Activated CD4-positive, alpha-beta T cell treated with anti-CD3 and anti-CD28 coated beads for 36 hours (primary cell): ENCODE measurements at regions of chr9 and their contacts with region 1.

Region 1: GRCh38 chr9:37465249-37466036 is at the start of gene ZBTB5:
- DNase-seq: peak; percentile 99
- ATAC-seq: peak; percentile 85
- H3K4me3 Mint-ChIP-seq: peak within 1 kb of the TSS; percentile 97
- H3K27ac Mint-ChIP-seq: peak within 1 kb of the TSS; percentile 96
- H3K4me1 Mint-ChIP-seq: peaks cover 30% of the 10 kb centered on the region
- H3K27me3 Mint-ChIP-seq: no peaks in the 10 kb centered on the region
- total RNA-seq, gene ZBTB5: 8.0 to 9.1 TPM

Region 2: DNA sequence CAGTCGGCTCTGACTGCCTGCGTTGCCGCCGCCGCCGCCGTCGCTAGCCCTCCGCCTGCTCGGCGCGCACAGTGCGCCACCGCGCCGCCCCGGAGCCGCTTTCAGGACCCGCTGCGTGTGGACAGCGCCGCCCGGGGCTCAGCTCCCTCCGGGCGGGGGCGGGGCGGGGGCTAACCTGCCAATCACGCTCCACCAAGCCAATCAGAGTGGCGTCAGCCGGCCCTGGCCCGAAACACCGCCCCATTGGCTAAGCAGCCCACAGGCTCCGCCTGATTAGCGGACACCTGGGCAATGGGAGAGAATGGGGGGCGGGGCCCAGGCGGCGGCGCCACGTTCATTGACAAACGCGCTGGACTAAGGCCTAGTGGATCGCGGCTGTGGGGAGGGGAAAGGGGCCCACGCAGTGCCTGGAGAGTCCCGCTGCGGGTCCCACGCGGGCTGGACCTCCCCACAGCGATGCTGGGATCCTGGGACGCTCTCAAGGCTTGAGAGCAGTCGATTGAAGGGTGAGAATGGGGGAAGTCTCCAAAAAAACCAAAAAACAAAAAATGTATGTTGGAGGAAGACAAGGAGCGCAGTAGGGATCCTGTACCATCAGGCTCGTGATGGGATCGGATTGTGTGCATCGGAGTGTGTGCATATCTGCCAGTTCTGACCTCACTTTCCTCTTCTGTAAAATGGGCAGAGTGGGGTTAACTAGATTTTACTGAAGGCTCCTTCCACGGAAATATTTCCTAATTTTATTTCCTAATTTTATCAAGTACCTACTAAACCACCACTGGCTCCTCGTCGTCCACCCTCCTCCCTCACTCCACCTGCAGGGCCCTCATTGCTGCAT is 437.6 kb before region 1 on chr9:
- CTCF ChIA-PET with region 1: no interaction called
- POLR2A ChIA-PET with region 1: no interaction called
- intact Hi-C with region 1: loop called in 1 of 2 experiments (anchors 1 kb)
- DNase-seq: peak; percentile 96
- ATAC-seq: peak; percentile 97
- H3K4me3 Mint-ChIP-seq: peak overlapping the region; percentile 64
- H3K27ac Mint-ChIP-seq: no peak overlapping the region
- H3K4me1 Mint-ChIP-seq: peaks cover 37% of the 10 kb centered on the region
- H3K27me3 Mint-ChIP-seq: peaks cover 80% of the 10 kb centered on the region

Region 3: DNA sequence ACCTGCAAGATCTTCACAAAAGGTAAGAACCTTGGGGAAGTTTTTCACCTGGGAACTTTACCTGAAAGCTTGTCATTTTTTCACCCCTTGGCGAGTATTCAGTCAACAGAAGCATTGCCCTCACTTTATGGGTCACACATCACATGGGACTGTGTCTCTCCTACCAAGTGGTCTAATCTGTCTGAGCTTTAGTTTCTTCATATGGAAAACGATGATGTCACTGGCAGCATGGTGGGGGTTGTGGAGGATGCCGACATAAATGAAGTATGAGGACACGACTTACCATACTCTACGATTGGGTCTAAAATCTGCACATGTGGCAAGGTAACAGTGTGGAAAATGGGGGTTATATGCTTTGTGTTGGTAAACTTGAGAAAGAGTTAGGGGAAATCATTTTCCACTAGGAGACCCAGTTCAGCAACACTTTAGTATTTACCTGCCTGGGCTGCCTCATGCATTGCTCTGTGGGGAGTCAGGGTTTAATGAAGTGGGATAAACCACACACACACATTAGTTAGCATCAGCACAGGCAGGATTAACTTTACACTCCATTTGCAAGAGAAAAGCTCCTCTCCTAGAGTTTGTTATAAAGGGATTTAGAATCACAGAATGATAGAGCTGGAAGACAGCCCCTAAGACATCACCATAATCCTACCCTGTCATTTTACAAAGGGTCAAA is 411.6 kb before region 1 on chr9:
- CTCF ChIA-PET with region 1: no interaction called
- POLR2A ChIA-PET with region 1: no interaction called
- intact Hi-C with region 1: no loop called
- DNase-seq: no peak
- ATAC-seq: no peak
- H3K4me3 Mint-ChIP-seq: no peak overlapping the region
- H3K27ac Mint-ChIP-seq: no peak overlapping the region
- H3K4me1 Mint-ChIP-seq: no peaks in the 10 kb centered on the region
- H3K27me3 Mint-ChIP-seq: peaks cover 33% of the 10 kb centered on the region

Region 4: DNA sequence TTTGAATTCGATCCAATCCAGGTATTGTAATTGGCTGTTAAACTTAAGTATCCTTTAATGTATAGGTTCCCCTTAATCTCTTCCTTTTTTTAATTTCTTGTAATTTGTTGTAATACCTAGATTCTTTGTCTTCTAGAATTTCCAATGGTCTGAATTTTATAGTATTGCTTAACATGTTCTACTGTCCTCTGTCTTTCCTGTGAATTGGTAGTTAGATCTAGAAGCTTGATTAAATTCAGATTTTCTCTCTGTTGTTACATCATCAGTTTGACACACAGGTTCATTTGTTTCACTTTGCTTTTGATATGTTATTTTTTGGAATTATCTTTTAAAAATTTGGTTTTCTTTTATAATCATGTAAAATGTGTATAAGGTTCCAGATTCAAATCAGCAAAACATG is 331.3 kb before region 1 on chr9:
- CTCF ChIA-PET with region 1: no interaction called
- POLR2A ChIA-PET with region 1: no interaction called
- intact Hi-C with region 1: no loop called
- DNase-seq: no peak
- ATAC-seq: no peak
- H3K4me3 Mint-ChIP-seq: no peak overlapping the region
- H3K27ac Mint-ChIP-seq: no peak overlapping the region
- H3K4me1 Mint-ChIP-seq: peaks cover 30% of the 10 kb centered on the region
- H3K27me3 Mint-ChIP-seq: no peaks in the 10 kb centered on the region

Region 5: GRCh38 chr9:37251452-37251851 is 214.0 kb before region 1 on chr9:
- CTCF ChIA-PET with region 1: no interaction called
- POLR2A ChIA-PET with region 1: no interaction called
- intact Hi-C with region 1: no loop called
- DNase-seq: no peak
- ATAC-seq: no peak
- H3K4me3 Mint-ChIP-seq: no peak overlapping the region
- H3K27ac Mint-ChIP-seq: no peak overlapping the region
- H3K4me1 Mint-ChIP-seq: peaks cover 4% of the 10 kb centered on the region
- H3K27me3 Mint-ChIP-seq: no peaks in the 10 kb centered on the region

Region 6: DNA sequence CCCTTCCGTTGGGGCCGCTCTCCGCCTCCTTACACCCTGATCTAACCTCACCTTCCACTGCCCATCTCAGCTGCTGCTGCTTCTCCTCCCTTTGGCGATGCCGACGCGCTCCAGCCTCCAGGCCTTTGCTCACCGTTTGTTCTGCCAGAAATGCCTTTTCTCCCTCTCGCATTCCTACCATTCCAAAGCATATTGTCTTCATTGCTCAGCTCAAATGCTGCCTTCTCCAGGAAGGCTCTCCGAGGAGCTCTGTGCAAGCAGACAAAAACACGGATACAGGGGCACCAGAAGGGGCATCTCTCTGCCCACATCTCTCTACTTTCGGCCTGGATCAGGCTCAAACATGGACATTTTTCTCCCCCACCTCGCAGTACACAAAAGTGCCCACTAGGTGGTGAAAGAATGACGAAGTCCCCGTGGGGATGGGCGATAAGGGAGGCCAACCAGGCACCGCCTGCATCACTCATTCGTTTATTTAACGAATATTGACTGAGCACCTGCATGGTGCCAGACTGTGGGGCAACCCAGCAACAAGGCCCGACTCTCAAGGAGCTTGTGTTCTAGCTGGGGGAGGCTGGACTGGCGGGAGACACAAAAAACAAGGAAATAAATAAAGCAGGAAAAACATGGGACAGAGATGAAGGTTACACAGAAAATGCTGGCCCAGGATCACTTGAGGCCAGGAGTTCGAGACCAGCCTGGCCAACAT is 50.3 kb before region 1 on chr9:
- CTCF ChIA-PET with region 1: no interaction called
- POLR2A ChIA-PET with region 1: no interaction called
- intact Hi-C with region 1: loop called (anchors 1 to 2 kb)
- DNase-seq: peak; percentile 88
- ATAC-seq: peak; percentile 72
- H3K4me3 Mint-ChIP-seq: no peak overlapping the region
- H3K27ac Mint-ChIP-seq: peak overlapping the region; percentile 75
- H3K4me1 Mint-ChIP-seq: peaks cover 28% of the 10 kb centered on the region
- H3K27me3 Mint-ChIP-seq: no peaks in the 10 kb centered on the region

Region 7: GRCh38 chr9:37753489-37754190 is 288.2 kb after region 1 on chr9 and contains the start of gene TRMT10B:
- CTCF ChIA-PET with region 1: no interaction called
- POLR2A ChIA-PET with region 1: no interaction called
- intact Hi-C with region 1: loop called in 1 of 2 experiments (anchors 1 kb)
- DNase-seq: peak; percentile 88
- ATAC-seq: peak; percentile 94
- H3K4me3 Mint-ChIP-seq: peak within 1 kb of the TSS; percentile 91
- H3K27ac Mint-ChIP-seq: peak within 1 kb of the TSS; percentile 92
- H3K4me1 Mint-ChIP-seq: peaks cover 32% of the 10 kb centered on the region
- H3K27me3 Mint-ChIP-seq: no peaks in the 10 kb centered on the region
- total RNA-seq, gene TRMT10B: 12.3 to 15.6 TPM

Region 8: DNA sequence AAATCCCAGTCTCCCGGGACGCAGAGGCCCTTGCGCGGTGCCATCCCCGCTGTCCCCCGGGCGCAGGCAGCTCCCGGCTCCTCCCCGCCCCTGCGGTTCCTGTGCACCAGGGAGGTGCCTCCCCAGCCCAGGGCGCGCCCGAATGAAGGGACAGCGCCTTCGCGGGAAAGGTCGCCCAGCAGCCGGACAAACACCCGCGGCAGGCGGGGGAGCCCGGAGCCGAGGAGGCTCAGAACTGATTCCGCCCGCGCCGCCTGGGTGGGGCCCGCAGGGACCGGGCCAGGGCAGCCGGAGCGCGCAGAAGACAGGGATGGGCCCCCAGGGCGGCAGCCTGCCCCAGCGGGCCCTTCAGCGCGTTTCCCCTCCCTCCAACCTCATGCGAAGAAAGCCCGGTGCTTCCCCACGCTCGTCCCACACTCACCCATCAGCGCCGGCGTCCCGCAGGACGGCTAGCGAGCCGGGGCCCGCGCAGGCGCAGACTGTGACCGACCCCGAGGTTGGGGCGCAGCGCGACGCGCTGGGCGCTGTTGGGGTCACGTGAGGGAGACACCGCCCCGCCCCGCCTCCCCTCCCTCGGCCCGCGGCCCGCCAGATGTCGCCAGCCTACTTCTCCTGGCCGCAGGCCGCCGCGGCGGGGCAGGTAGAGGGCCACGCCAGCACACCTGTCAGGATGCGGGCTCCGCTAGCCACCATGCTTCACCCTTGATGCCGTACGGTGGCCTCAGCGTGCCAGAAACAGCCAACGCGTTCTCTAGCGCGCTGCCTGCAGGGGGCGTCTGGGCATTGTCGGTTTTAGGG is 438.4 kb after region 1 on chr9 and contains the start of gene SLC25A51:
- CTCF ChIA-PET with region 1: no interaction called
- POLR2A ChIA-PET with region 1: no interaction called
- intact Hi-C with region 1: loop called in 1 of 2 experiments (anchors 1 kb)
- DNase-seq: peak; percentile 96
- ATAC-seq: peak; percentile 86
- H3K4me3 Mint-ChIP-seq: peak within 1 kb of the TSS; percentile 85
- H3K27ac Mint-ChIP-seq: peak within 1 kb of the TSS; percentile 89
- H3K4me1 Mint-ChIP-seq: peaks cover 11% of the 10 kb centered on the region
- H3K27me3 Mint-ChIP-seq: no peaks in the 10 kb centered on the region
- total RNA-seq, gene SLC25A51: 25.5 to 29.4 TPM